Dorsolateral prefrontal cortex (tissue), 120 donors: ENCODE measurements at regions of chr16 and their contacts with region 1.

Region 1: DNA sequence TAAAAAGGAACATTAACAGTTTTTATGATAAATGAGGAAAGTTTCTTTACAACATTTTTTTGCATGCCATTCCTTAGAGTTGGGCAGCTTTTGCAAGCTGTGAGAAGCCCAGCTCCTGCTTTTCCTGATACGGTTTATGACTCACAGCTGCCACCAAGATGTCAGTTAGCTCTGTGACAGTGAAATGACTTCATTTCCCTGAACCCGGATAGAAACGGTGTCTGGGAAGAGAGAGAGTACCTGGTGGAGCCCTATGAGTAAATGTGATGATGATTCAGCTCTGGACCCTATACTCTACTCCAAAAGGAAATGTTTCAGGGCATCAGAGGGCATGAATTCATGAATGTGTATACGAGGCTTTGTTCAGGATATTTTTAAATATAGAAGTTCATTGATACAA is 366.3 kb upstream of the HSBP1 start:
- DNase-seq: peak in 1 of 10 donors; percentile 7
- H3K4me3 ChIP-seq: no peak overlapping the region
- H3K27ac ChIP-seq: no peak overlapping the region
- H3K27me3 ChIP-seq: no peaks in the 10 kb centered on the region
- CTCF ChIP-seq: peak in 10 of 56 donors; percentile 5 to 22 (median 17)

Region 2: DNA sequence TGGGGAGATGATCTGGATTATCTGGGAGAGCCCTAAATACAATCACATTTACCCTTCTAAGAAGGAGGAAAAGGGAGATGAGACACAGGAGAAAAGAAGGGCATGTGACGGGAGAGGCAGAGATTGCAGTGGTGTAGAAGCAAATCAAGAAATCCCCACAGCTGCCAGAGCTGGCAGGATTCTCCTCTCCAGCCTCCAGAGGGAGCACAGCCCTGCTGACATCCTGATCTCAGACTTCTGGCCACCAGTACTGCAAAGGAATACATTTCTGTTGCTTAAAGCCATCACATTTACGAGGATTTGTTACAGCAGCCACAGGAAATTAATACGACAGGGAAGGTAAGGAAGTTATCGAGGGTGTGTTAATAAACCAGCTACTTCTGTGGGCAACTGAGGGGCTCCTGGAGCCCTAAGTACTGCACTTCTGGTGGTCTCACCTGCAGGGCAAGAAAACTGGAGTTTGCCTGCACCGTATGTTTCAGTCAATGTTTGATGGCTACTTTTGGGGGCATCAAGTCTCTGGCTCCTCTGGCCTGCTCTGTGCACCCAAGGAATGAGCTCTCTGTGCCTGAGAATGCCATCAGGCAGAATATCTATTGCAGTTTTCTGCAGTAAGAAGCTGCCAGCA is 837.6 kb before region 1 on chr16:
- intact Hi-C with region 1: loop called in 1 of 2 experiments (anchors 10 kb)
- DNase-seq: peak; percentile 14 to 68 (median 56)
- H3K4me3 ChIP-seq: no peak overlapping the region
- H3K27ac ChIP-seq: no peak overlapping the region
- H3K27me3 ChIP-seq: peaks cover 0 to 16% (median 0%) of the 10 kb centered on the region in 45 donors
- CTCF ChIP-seq: peak in 54 of 56 donors; percentile 36 to 78 (median 66)

Region 3: DNA sequence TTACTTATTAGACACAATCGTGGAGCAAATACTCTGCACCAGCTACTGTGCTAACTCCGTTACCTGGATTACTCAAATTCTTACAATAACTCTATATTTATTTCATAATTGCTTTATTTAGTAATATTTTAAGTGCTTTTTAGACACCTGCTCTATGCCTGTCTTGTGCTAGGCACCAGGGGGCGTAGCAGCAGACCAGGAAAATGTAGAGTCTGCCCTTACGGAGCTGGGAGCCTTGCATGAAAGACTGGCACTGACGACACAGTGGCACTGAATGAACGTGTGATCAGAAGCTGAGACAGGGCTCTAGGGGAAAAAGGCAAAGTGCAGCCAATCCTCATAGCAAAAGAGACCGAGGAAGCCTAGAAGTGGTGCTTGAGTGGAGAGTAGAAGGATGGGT is 328.2 kb before region 1 on chr16:
- intact Hi-C with region 1: loop called in 1 of 2 experiments (anchors 10 kb)
- DNase-seq: peak; percentile 20 to 75 (median 61)
- H3K4me3 ChIP-seq: no peak overlapping the region
- H3K27ac ChIP-seq: no peak overlapping the region
- H3K27me3 ChIP-seq: peaks cover 0 to 6% (median 0%) of the 10 kb centered on the region in 45 donors
- CTCF ChIP-seq: peak; percentile 18 to 88 (median 72)

Region 4: DNA sequence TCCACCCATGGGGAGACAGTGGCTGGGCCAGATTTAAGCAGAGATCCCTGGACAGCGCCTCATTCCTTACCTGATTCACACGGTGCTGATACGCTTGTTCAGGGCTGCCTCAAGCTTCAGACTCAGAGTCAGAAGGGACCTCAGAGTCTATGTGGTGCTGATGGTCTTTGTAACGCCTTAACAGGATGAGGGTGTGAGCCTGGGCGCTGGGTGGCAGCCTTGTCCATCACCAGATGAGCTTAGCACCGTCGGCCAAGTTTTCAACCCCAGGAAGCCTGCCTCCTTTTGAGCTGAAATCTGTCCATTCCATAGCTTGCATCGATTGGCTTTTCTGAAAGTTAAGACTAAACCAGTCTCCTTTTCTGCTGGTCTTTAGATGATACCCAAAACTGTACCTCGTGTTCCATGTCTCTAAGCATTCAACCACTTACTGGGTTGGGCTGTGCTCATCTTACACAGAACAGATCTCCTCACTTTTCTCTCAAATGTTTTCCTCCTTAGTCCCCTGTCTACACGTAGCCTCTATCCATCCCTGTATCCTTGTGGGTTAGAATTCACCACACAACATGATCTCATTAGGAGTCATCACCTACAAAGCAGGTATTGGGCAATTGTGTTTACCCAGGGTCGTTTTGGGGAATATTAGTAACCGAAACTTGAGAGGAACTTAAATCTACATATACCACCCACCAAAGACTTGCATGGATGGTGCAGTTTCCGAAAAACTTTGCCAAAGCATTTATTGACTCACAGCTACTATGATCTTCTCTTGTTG is 241.3 kb before region 1 on chr16:
- intact Hi-C with region 1: loop called in 1 of 2 experiments (anchors 5 kb)
- DNase-seq: peak; percentile 42 to 80 (median 55)
- H3K4me3 ChIP-seq: no peak overlapping the region
- H3K27ac ChIP-seq: peak overlapping the region in 1 of 59 donors; percentile 57
- H3K27me3 ChIP-seq: no peaks in the 10 kb centered on the region
- CTCF ChIP-seq: peak in 47 of 56 donors; percentile 6 to 78 (median 46)

Region 5: DNA sequence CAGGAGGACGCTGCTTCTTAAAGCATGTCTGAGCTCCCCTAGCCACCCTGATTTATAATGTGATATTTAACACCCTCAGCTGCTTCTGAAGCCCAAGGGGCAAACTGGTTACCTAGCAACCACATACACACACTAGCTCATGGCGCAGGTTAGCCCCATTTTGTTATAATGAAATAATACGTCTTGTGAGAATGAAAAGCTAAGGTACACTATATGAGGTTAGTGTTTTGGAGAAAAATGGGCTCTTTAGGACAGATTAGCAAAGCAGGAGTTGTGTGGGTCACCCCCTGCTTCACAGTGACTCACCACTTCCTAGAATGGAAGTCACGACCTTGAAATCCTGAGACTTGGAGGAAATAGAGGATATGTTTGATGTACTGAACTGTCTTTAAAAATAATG is 38.5 kb before region 1 on chr16:
- intact Hi-C with region 1: no loop called
- DNase-seq: no peak
- H3K4me3 ChIP-seq: no peak overlapping the region
- H3K27ac ChIP-seq: no peak overlapping the region
- H3K27me3 ChIP-seq: peaks cover 0 to 5% (median 0%) of the 10 kb centered on the region in 45 donors
- CTCF ChIP-seq: no peak

Region 6: DNA sequence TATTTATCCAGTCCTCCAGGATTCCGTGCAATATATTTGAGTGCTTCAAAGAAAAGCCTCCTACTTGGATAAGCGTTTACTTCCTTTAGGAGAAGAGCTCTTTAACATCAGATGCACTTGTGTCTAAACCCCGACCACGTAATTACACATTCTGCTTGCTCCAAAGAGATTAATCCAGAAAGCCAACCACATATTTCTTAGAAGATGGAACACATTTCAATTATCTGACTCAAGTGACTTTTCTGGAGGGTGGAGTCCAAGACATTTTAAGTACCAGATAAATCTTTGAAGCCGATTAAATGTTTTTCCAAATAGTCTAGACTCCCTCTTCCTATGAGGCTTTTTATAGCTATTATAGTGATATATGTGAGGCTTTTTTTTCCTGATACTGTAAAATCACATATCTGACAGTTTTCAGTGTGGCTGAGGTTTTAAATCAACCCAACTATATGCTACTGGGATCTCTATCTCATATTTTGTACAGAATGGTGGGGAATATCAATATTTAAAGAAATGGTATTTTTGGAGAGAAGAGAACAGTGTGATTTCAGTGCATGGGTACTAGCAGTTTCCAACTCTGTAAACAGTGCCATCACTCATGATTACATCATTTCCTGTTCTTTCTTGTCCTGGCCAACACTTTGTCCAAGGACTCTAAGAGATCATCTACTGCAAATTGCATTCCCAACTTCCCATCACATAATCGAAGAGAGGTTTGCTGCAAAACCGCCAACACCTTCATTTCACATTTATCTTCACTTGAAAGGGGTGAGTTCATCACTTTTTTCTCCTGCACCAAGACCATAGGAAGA is 173.8 kb after region 1 on chr16:
- intact Hi-C with region 1: no loop called
- DNase-seq: no peak
- H3K4me3 ChIP-seq: no peak overlapping the region
- H3K27ac ChIP-seq: no peak overlapping the region
- H3K27me3 ChIP-seq: no peaks in the 10 kb centered on the region
- CTCF ChIP-seq: no peak

Region 7: GRCh38 chr16:83661656-83662055 is 220.1 kb after region 1 on chr16:
- intact Hi-C with region 1: no loop called
- DNase-seq: no peak
- H3K4me3 ChIP-seq: no peak overlapping the region
- H3K27ac ChIP-seq: no peak overlapping the region
- H3K27me3 ChIP-seq: no peaks in the 10 kb centered on the region
- CTCF ChIP-seq: no peak